ENCODE measurements at regions of chr17 and their contacts with region 1.

Region 1: GRCh38 chr17:74176546-74177001 is 26.9 kb upstream of the RPL38 start:
- DNase-seq: peak; percentile 82
- ATAC-seq: peak; percentile 94
- H3K4me3 ChIP-seq: no peak overlapping the region
- H3K27ac ChIP-seq: no peak overlapping the region
- H3K4me1 ChIP-seq: 0 out of 2 replicates have a peak, but pooled peaks cover 8% of the 10 kb centered on the region
- H3K27me3 ChIP-seq: peaks cover 69% of the 10 kb centered on the region
- CTCF ChIP-seq: peak; percentile 97

Region 2: DNA sequence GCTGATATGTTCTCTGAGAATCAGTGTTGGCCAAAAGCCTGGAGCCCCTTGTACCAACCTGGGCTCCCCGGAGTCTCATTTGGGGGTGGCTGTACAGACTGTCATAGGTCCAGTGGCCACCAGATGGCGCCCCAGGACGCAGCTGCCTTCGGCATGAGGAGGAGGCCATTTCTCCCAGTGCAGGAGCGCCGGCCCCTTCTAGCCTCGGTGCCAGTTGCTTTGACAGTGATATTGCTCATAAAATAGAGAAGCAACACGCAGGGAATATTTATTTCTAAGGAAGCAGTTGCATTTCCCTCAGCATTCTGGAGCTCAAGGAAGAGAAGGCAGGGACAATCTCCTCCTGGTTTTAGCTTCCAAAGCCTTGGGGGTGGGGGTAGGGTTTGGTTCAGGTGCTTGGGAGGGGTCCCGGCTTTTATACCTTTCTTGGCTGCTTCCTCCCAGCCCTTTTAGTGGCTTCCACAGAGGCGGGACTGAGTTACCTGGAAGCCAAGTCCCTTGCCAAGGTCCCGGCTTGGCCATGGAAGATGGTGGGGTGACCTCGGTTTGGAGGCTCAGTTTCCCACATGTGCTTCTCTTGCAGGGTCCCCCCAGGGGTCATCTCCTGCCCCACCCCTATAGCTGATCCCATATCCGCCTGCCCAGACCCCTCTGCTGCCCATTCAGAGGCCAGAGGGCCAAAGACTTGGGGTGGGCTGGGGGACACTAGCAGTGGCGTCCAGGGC is 747.0 kb before region 1 on chr17:
- CTCF ChIA-PET with region 1: no interaction called
- POLR2A ChIA-PET with region 1: no interaction called
- intact Hi-C with region 1: loop called (anchors 1 kb)
- DNase-seq: peak; percentile 90
- ATAC-seq: peak; percentile 93
- H3K4me3 ChIP-seq: no peak overlapping the region
- H3K27ac ChIP-seq: no peak overlapping the region
- H3K4me1 ChIP-seq: peaks cover 4% of the 10 kb centered on the region; the same call in 1 of the 2 replicates
- H3K27me3 ChIP-seq: 0 out of 2 replicates have a peak, but pooled peaks cover 4% of the 10 kb centered on the region
- CTCF ChIP-seq: peak; percentile 99

Region 3: DNA sequence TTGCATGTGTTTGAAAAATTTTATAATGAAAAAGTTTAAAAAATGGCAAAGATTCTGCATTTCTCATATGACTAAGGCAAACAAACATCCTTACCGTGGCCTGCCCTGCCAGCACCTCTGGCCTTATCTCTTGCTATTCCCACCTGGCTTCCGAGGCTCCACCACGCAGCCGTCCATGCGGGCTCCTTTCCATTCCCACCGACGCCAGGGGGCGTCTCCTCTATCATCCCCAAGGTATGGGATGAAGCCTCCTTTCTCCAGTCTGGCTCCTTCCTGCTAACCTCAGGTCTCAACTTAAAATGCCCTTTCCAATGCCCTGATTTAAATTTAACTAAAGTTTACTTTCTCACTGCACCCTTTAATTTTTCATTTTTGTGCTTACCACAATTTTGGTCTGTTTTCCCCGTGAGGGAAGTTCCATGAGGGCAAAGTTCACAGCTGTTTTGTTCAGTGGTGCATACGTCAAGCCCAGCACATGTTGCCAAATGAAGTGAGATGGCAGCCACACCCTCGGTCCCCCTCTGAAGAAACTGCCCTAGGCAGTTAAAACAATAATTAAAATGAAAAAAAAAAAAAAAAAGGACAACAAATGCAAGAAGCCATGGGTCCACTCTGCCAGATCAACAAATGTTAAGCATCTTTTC is 519.0 kb before region 1 on chr17:
- CTCF ChIA-PET with region 1: no interaction called
- POLR2A ChIA-PET with region 1: no interaction called
- intact Hi-C with region 1: loop called (anchors 2 kb)
- DNase-seq: peak; percentile 67
- ATAC-seq: peak; percentile 62
- H3K4me3 ChIP-seq: no peak overlapping the region
- H3K27ac ChIP-seq: no peak overlapping the region
- H3K4me1 ChIP-seq: no peaks in the 10 kb centered on the region
- H3K27me3 ChIP-seq: peaks cover 68% of the 10 kb centered on the region
- CTCF ChIP-seq: peak; percentile 79

Region 4: DNA sequence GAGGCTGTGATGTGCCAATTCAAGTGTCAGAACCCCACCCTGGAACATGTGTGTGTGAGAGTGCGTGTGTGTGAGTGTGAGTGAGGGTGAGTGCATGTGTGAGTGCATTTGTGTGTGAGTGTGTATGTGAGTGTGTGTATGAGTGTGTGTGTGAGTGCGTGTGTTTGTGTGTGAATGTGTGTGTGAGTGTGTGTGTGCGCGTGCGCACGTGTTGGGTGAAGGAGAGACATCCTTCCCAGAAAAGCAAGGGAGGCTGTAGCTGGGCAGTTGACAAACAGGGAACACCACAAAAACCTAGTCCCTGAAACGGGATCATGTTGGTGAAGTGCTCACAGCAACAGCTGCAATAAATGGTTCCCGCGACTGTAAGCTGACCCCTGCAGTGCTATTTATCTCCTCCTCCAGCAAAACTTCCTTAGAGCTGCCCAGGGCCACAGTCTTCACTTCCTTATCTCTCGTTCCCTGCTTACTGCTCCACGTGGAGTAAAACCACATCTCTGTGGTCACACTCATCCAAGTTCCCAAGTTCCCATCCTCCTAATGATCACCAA is 13.2 kb before region 1 on chr17:
- CTCF ChIA-PET with region 1: no interaction called
- POLR2A ChIA-PET with region 1: no interaction called
- intact Hi-C with region 1: no loop called
- DNase-seq: no peak
- ATAC-seq: no peak
- H3K4me3 ChIP-seq: no peak overlapping the region
- H3K27ac ChIP-seq: no peak overlapping the region
- H3K4me1 ChIP-seq: no peaks in the 10 kb centered on the region
- H3K27me3 ChIP-seq: peaks cover 80% of the 10 kb centered on the region
- CTCF ChIP-seq: no peak